Mammary epithelial cell (primary cell): ENCODE measurements at regions of chr1 and their contacts with region 1.

Region 1: GRCh38 chr1:161706482-161707347 is at the start of gene FCRLA:
- DNase-seq: peak; percentile 94
- H3K4me3 ChIP-seq: no peak within 1 kb of the TSS
- H3K27ac ChIP-seq: peak within 1 kb of the TSS; percentile 81
- H3K4me1 ChIP-seq: peaks cover 21% of the 10 kb centered on the region
- H3K27me3 ChIP-seq: no peaks in the 10 kb centered on the region
- CTCF ChIP-seq: no peak
- total RNA-seq, gene FCRLA: 0.67 to 4.4 TPM

Region 2: DNA sequence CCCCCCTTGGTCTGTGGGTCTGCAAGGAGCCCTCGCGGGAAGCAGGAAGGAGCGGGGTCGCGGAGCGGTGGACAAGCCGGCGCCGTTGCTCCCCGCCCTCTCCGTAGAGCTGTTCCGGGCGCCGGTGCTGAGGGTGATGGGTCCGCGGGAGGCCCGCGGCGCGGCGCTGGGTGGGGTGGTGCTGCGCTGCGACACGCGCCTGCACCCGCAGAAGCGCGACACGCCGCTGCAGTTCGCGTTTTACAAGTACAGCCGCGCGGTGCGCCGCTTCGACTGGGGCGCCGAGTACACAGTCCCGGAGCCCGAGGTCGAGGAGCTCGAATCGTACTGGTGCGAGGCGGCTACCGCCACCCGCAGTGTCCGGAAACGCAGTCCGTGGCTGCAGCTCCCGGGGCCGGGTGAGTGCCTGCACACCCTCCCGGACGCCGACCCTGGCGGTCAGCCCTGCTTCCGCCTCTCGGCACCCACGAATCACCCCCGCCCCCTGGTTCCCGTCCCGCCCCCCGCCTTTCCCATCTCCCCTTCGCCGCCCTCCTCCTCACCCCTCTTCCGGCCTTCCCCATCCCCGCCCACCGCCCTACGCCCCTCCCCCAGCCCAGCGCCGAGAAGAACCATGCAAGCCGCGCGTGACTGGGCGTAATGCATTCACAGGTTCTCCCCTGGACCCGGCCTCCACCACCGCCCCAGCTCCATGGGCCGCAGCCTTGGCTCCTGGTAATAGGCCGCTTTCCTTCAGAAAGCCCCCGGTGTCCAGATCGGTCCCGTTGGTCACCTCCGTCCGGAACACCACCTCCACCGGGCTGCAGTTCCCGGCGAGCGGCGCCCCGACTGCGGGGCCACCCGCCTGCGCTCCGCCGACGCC is 20.1 kb after region 1 on chr1:
- CTCF ChIA-PET with region 1: no interaction called
- dilution Hi-C with region 1: no loop called
- in situ Hi-C with region 1: no loop called
- intact Hi-C with region 1: loop called (anchors 1 kb)
- DNase-seq: peak; percentile 80
- H3K4me3 ChIP-seq: peak overlapping the region; percentile 73 to 78 (median 74)
- H3K27ac ChIP-seq: peak overlapping the region; percentile 77
- H3K4me1 ChIP-seq: peaks cover 34% of the 10 kb centered on the region
- H3K27me3 ChIP-seq: no peaks in the 10 kb centered on the region
- CTCF ChIP-seq: no peak

Region 3: GRCh38 chr1:161738627-161739287 is 32.0 kb after region 1 on chr1:
- CTCF ChIA-PET with region 1: no interaction called
- dilution Hi-C with region 1: no loop called
- in situ Hi-C with region 1: no loop called
- intact Hi-C with region 1: no loop called
- DNase-seq: peak; percentile 74
- H3K4me3 ChIP-seq: no peak overlapping the region
- H3K27ac ChIP-seq: no peak overlapping the region
- H3K4me1 ChIP-seq: peaks cover 36% of the 10 kb centered on the region
- H3K27me3 ChIP-seq: no peaks in the 10 kb centered on the region
- CTCF ChIP-seq: peak; percentile 68 to 79